AG04450 (cell line): ENCODE measurements at regions of chr1 and their contacts with region 1.

Region 1: GRCh38 chr1:161165742-161166668 is at the start of gene PPOX:
- DNase-seq: peak; percentile 93
- H3K4me3 ChIP-seq: peak within 1 kb of the TSS; percentile 86
- H3K27ac ChIP-seq: peak within 1 kb of the TSS; percentile 93
- H3K27me3 ChIP-seq: no peaks in the 10 kb centered on the region
- CTCF ChIP-seq: peak; percentile 55
- polyA plus RNA-seq, gene PPOX: 9.7 and 9.8 TPM in 2 replicates

Region 2: DNA sequence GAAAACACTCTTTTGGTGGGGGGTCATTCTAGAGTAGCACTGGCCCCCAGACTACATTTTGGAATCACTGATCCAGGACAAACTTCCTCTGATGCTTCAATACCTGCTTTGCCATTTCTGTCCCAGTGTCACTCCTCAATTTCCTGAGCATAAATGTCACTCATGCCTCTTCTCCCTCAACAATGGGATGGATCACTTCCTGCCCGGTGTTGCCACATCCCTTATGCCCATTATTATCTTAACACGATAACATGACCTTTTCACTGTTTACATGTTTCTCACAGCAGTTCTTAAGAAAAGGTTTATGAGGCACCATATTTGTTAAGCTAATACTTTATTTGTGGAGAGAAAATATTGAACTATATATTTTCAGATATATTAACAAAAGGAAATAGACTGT is 277.1 kb before region 1 on chr1:
- CTCF ChIA-PET with region 1: no interaction called
- POLR2A ChIA-PET with region 1: no interaction called
- DNase-seq: no peak
- H3K4me3 ChIP-seq: no peak overlapping the region
- H3K27ac ChIP-seq: no peak overlapping the region
- H3K27me3 ChIP-seq: no peaks in the 10 kb centered on the region
- CTCF ChIP-seq: no peak

Region 3: DNA sequence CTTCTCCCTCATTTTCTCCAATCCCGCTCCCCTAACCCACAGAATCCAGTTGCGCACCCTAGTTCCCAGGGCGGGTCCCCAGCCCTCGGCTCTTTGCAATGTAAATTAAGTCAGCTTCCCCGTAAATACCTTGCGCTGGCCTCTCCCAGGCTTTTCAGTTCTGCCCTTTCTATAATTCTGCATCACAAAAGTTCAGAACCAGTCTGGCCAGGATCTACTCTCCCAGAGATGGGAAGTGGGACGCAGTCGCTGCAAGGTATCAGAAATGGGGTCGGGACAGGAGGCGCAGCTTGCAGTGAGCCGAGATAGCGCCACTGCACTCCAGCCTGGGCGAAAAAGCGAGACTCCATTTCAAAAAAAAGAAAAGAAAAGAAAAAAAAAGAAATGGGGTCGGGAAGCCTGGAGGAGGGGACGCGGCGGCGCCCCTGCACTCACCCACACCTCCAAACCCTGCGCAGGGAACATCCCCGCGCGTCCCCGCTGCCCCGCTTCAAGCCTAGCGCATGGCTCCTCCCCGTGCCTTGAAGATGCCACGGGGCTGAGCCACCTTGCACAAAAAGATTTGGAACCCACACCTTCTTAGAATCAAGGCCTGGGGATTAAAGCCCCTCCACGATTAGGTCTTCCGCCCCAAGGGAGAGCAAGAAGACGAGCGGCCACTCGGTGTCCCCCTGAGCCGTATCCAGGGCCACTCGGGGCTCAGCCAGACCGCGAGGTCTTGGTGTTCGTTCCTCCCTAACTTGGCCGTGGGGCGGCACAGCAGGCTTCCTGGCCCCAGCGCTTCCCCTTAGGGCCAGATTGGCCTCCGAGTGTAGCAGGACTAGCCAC is 184.2 kb before region 1 on chr1:
- CTCF ChIA-PET with region 1: no interaction called
- POLR2A ChIA-PET with region 1: no interaction called
- DNase-seq: no peak
- H3K4me3 ChIP-seq: no peak overlapping the region
- H3K27ac ChIP-seq: no peak overlapping the region
- H3K27me3 ChIP-seq: peaks cover 23% of the 10 kb centered on the region
- CTCF ChIP-seq: no peak

Region 4: DNA sequence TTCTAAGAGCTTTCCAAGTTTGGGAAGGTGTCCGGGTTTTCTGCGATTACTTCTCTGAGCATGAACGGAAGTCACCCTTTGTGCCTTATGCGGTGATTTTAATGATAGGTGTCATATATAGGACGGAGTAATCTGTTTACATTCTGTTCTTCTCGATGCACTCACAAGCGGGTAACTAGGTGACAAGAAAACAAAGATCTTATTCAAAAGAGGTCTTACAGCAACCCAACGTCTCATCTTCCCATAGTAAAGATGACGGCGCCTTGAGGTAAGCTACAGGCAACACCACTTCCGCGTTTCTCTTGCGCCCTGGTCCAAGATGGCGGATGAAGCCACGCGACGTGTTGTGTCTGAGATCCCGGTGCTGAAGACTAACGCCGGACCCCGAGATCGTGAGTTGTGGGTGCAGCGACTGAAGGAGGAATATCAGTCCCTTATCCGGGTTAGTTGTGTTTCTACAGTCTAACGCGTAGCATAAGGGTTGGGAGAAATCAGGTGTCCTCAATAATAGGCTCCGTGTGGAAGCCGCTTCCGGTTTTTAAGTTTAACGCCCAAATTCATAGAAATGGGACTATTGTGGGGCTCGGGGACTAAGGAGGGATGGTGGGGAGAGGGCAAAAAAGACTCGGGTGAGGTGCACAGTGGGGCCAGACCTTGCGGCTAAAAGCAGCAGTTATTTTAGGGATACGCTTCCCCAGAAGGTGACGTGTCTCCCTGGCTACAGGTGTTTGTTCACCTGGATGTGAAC is 12.2 kb before region 1 on chr1 and contains the start of gene UFC1:
- CTCF ChIA-PET with region 1: interaction called, 24 read pairs
- POLR2A ChIA-PET with region 1: interaction called, 5 read pairs
- DNase-seq: peak; percentile 75
- H3K4me3 ChIP-seq: peak within 1 kb of the TSS; percentile 96
- H3K27ac ChIP-seq: peak within 1 kb of the TSS; percentile 99
- H3K27me3 ChIP-seq: no peaks in the 10 kb centered on the region
- CTCF ChIP-seq: no peak
- polyA plus RNA-seq, gene UFC1: 129 and 146 TPM in 2 replicates

Region 5: GRCh38 chr1:161216945-161217712 is 51.1 kb after region 1 on chr1:
- CTCF ChIA-PET with region 1: interaction called, 10 read pairs
- POLR2A ChIA-PET with region 1: no interaction called
- DNase-seq: no peak
- H3K4me3 ChIP-seq: no peak overlapping the region
- H3K27ac ChIP-seq: peak overlapping the region; percentile 69
- H3K27me3 ChIP-seq: no peaks in the 10 kb centered on the region
- CTCF ChIP-seq: no peak